ENCODE measurements at regions of chr4 and their contacts with region 1.

Region 1: GRCh38 chr4:158809611-158810486 is 41.0 kb downstream of the FNIP2 start:
- DNase-seq: no peak
- H3K4me3 Mint-ChIP-seq: peak overlapping the region; percentile 74
- H3K27ac Mint-ChIP-seq: peak overlapping the region; percentile 88
- H3K4me1 Mint-ChIP-seq: peaks cover 45% of the 10 kb centered on the region
- H3K27me3 Mint-ChIP-seq: no peaks in the 10 kb centered on the region

Region 2: DNA sequence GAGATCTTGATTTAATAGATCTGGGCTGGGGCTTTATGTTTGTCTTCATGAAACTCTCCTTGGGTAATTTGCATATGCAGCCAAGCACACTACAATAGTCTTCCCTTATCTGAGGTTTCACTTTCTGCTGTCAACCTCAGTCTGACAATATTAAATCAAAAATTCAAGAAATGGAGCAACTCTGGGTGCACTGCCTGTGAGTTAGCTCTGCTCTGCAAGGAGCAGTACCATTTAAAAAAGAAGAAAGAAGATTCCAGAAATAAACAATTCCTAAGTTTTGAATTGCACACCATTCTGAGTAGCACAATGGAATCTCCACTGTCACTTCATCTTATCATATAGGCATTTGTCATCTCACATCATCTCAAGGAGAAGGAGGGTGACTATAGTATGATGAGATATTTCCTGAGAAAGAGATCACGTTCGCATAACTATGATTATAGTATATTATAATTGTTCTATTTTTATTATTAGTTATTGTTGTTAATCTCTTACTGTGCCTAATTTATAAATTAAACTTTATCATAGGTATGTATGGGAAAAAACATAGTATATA is 31.6 kb before region 1 on chr4:
- intact Hi-C with region 1: loop called (anchors 2 kb)
- DNase-seq: no peak
- H3K4me3 Mint-ChIP-seq: peak overlapping the region; percentile 61
- H3K27ac Mint-ChIP-seq: peak overlapping the region; percentile 64
- H3K4me1 Mint-ChIP-seq: peaks cover 47% of the 10 kb centered on the region
- H3K27me3 Mint-ChIP-seq: no peaks in the 10 kb centered on the region